ENCODE measurements at regions of chr12 and their contacts with region 1.

Region 1: DNA sequence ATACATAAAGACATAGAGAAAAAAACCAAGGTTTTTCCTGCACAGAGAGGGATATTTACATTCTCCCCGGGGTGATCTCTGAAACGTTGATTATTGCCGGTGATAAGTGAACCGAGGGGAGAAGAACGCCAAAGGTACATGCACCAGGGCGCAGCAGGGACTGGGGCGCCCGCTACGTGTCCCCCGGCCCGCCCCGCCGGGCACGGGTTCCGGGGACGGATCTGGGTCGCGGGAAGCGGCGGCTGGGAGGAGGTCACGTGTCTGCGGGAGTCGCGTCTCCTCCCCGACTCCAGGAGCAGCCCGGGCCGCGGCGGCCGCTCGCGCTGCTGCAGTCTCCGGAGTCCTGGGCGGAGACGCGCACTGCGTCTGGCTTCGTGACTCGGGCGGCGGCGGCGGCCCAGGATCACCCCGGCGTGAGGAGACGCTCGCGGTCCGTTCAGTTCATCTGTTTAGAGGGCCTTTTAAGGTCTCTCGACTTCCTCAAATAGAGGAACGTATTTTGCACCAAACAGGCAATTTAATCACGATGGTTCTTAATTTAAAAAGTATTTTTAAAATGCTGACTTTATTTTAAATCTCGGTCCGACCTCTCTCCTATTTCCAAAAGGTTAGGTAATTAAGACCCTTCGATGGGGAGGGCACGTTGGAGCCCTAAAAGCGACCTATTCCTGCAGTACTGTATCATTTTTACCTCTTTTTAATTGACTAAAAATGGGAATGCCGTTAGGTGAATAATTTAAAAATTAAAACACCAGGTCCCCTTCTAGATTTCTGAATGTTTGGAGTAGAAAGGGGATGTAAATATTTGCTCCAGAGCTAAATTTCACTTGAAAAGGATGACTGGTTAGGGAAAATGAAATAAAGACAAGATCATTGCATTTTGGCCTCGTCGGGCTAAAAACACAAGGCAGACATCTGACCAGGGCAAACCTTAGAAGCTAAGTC is 1.8 kb upstream of the BHLHE41 start:
- DNase-seq: peak; percentile 95
- ATAC-seq: peak; percentile 87

Region 2: GRCh38 chr12:26068503-26068902 is 58.1 kb before region 1 on chr12:
- intact Hi-C with region 1: no loop called
- DNase-seq: no peak
- ATAC-seq: no peak

Region 3: GRCh38 chr12:26153421-26154154 is 27.0 kb after region 1 on chr12:
- intact Hi-C with region 1: loop called (anchors 2 kb)
- DNase-seq: no peak
- ATAC-seq: peak; percentile 78

Region 4: DNA sequence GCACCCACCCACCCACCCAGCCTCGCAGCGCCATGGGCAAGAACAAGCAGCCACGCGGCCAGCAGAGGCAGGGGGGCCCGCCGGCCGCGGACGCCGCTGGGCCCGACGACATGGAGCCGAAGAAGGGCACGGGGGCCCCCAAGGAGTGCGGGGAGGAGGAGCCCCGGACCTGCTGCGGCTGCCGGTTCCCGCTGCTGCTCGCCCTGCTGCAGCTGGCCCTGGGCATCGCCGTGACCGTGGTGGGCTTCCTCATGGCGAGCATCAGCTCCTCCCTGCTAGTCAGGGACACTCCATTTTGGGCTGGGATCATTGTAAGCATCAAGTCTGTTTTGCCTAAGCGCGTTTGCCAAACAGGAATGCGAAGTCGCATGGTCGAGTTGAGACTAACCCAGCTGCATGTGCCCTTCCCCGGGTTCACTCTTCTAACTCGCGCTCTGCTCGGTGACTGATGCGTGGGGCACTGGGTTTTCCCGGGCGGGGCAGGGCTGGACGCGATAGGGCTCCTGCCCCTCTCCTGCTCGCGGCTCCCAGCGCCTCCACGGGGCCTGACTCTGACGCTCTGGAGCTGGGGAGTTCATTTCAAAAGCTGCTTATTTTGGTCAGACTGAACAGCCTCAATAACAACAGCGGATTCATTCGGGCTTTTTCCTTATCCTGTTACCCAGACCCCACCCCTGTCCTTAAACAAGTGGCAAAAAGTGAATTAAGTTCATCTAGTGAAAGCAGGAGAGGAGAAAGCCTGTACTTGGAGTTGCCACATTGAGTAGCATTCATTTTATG is 69.2 kb after region 1 on chr12:
- intact Hi-C with region 1: loop called (anchors 2 kb)
- DNase-seq: peak; percentile 71
- ATAC-seq: peak; percentile 74

Region 5: DNA sequence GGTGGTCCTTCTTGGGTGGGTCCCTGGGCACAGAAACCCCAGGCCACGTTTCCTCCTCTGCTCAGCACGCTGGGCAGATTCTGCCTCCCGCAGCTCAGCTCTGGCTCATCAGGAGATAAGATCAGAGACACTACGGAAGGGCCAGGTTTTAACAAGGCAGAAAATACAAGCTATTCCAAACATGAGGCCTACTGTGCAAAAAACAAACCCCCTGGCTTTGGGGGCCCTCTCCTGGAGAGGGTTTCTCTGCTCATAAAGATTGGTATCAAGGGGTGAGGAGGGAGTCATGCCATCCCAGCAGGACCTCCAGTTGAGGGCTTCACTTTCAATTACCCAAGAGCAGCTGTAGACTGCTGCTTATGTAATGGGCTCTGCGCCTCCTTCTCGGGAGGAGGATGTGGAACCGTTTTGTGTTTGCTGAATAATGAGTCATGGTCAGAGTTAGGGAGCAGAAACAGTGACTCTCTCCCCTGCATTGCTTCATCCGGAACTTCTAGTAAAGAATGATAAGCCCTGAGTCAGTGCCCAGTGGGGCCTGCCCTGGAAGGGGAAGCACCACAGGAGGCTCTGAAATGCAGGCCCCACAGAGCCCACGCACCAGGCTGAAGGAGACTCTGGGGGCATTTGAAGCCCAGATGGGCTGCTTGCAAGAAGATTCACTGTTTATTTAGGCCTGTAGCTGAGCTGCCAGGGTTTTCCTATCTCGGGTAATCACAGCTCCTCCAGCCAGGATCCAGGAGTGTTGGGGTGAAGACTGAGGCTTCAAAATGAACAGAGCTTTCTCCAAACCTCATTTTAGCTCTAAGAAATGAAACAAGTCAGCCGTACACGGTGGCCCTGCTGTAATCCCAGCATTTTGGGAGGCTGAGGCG is 148.1 kb after region 1 on chr12:
- intact Hi-C with region 1: loop called (anchors 10 kb)
- DNase-seq: peak; percentile 89
- ATAC-seq: peak; percentile 97

Region 6: DNA sequence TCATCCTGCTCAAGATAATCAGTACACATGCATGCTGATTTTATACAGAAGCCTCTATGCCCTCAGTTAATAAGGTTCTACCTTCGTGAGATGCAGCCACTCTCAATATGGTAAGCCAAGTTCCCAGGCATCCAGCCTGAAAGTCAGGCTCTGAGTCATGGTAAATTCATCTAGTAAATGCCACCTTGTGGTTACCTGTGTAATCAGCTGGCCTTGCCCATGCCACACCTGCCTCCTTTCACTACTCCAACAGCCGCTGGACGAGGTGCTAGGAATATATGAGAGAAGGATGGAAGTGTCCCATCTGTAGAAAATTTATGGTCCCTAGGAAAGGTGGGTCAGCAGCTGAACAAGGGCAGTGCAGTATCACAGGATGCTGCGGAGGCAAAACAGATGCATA is 276.0 kb after region 1 on chr12:
- intact Hi-C with region 1: loop called (anchors 10 kb)
- DNase-seq: no peak
- ATAC-seq: no peak